ENCODE measurements at regions of chr19 and their contacts with region 1.

Region 1: GRCh38 chr19:55385740-55386529 is at the start of gene RPL28:
- DNase-seq: peak; percentile 98
- ATAC-seq: peak; percentile 92
- total RNA-seq, gene RPL28: 664 TPM

Region 2: GRCh38 chr19:55301459-55302317 is 84.2 kb before region 1 on chr19:
- intact Hi-C with region 1: loop called (anchors 2 kb)
- DNase-seq: peak; percentile 95
- ATAC-seq: peak; percentile 89

Region 3: DNA sequence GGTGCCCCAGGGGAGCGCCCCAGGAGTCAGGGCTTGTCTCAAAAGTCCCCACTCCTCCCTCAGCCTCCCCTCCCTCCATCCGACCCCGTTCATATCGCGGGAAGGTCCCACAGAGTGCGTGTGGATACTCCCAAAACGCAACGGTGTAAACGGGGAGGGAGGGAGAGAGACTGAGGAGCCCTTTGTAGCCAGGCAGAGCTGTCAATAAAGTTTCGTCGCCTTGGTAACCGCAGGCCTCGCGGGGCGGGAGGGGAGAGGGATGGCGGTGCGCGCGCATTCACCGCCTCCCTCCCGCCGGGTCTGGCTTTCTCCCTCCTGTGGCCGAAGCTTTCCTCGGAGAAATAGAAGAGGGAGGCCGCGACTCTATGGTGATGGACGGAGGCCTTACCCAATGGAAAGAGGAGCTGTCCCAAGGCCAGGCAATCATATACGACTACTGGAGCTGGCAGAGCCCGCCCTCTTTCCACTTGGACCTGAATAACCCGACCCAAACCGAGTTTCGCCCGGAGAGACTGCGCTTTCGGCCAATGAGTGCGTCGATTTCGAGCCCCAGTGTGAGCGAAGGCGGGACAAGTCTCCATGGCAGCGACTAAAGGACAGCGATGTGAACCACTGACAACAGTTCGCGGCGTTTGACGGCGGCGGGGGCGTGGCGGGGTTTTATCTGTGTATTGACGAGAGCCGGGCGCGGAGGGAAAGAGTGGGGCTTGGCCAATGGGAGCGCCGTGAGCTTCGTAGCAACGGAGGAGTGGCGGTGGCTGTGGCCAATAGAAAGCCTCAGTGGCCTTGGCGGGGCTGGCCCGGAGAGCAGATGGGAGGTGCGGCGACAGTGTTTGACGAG is 46.7 kb before region 1 on chr19 and contains the start of gene KMT5C:
- intact Hi-C with region 1: loop called (anchors 1 kb)
- DNase-seq: peak; percentile 100
- ATAC-seq: peak; percentile 95
- total RNA-seq, gene KMT5C: 6.2 TPM

Region 4: GRCh38 chr19:55461259-55461973 is 75.5 kb after region 1 on chr19 and contains the start of gene ISOC2:
- intact Hi-C with region 1: loop called (anchors 1 kb)
- DNase-seq: peak; percentile 100
- ATAC-seq: peak; percentile 94
- total RNA-seq, gene ISOC2: 55.2 TPM

Region 5: DNA sequence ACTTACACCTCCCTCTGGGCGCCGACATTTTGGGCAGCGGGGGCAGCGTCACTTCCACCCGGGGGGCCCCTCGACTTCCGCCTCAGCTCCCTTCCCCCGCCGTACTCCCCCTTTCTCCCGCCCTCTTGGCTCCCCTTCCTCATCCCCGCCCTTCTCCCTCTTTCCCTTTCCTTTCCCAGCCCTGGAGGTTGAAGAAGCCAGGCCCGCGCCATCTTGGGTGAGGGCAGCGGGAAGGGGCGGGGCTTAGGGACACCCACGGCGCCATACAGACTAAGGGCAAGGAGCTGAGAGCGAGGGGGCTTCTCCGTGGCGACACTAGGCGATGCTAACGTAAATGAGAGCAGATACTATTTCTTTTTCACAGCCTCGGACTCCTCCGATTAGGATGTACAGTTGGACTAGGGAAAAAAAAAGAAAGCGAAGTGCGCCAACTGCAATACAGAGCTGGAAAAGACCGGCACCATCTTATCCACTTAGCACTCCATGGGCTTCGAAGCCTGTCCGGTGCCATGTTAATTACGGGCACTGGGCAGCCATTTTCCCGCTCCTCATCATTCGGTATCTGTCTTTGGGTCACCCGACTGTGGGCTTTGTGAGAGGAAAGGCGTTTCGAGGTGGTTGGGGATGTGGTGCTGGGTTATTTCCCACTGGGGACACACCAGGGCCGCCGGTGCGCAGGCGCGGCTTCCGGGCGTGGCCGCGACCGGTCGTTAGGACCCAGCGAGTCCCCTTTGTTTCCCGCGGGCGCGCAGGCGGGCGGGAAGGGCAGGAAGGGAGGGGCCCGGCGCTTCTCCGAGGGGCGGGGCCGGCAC is 213.7 kb after region 1 on chr19 and contains the start of gene FIZ1:
- intact Hi-C with region 1: loop called (anchors 10 kb)
- DNase-seq: peak; percentile 98
- ATAC-seq: peak; percentile 91
- total RNA-seq, gene FIZ1: 14.8 TPM

Measured in Right ventricle myocardium inferior (tissue), 1 donor.